ENCODE measurements at regions of chr12 and their contacts with region 1.

Region 1: DNA sequence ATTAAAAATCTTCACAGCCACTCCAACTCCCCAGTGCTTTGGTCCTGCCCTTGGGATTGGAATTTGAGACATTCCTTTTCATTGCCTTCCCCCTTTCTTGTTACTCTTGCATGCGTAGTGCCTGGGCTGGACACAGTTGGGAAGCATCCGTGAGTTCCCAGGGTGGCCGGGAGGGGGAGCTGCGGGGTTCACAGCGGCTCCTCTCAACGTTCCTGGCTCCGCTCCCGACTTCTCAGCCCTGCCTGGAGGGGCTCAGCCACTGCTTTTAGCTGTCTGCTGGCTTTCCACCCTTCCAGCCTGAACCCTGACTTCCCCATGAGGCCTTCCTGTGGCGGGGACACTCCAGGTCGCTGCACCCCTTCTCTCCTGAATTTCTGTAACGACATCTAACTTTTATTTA is 3.2 kb downstream of the TEX52 start:
- DNase-seq: peak; percentile 94
- H3K4me3 ChIP-seq: peak overlapping the region in 1 of 4 donors; percentile 20
- H3K27ac ChIP-seq: no peak overlapping the region
- H3K4me1 ChIP-seq: peaks cover 0 to 9% (median 4%) of the 10 kb centered on the region in 4 donors
- H3K27me3 ChIP-seq: no peaks in the 10 kb centered on the region
- CTCF ChIP-seq: peak; percentile 71 to 91 (median 76)
- EP300 ChIP-seq: no peak
- POLR2A ChIP-seq: no peak

Region 2: GRCh38 chr12:2944401-2945047 is 90.9 kb after region 1 on chr12:
- intact Hi-C with region 1: loop called (anchors 10 kb)
- DNase-seq: no peak
- H3K4me3 ChIP-seq: no peak overlapping the region
- H3K27ac ChIP-seq: peak overlapping the region in 1 of 4 donors; percentile 24
- H3K4me1 ChIP-seq: peaks cover 6 to 12% (median 11%) of the 10 kb centered on the region in 4 donors
- H3K27me3 ChIP-seq: no peaks in the 10 kb centered on the region
- CTCF ChIP-seq: peak; percentile 63 to 78 (median 66)
- EP300 ChIP-seq: no peak
- POLR2A ChIP-seq: no peak

Region 3: GRCh38 chr12:3041558-3042164 is 188.0 kb after region 1 on chr12:
- intact Hi-C with region 1: loop called (anchors 5 kb)
- DNase-seq: no peak
- H3K4me3 ChIP-seq: no peak overlapping the region
- H3K27ac ChIP-seq: no peak overlapping the region
- H3K4me1 ChIP-seq: peaks cover 0 to 6% (median 4%) of the 10 kb centered on the region in 4 donors
- H3K27me3 ChIP-seq: peaks cover 0 to 4% (median 0%) of the 10 kb centered on the region in 4 donors
- CTCF ChIP-seq: peak; percentile 51 to 67 (median 63)
- EP300 ChIP-seq: no peak
- POLR2A ChIP-seq: no peak

Measured in esophagus muscularis mucosa (tissue), 4 donors.